Heart right ventricle (tissue), 16 donors: ENCODE measurements at regions of chr4 and their contacts with region 1.

Region 1: DNA sequence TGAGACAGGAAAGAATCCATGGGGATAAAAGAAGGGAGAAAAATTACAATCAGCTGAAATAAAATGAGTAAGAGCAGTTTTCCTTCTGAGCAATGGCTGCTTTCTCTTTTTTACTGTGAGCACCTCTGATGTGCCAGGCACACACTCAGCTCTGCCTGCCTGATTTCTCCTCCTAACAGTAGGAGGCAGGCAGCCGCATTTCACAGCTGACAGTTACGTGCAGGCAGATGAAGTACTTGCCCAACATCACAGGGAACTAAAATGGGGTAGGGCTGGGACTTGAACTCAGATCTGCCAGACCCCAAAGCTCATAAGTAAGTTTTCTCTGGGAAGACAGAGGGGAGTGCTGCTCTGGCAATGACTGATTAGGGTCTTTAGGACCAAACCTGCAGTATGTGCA is 54.6 kb downstream of the C4orf50 start:
- DNase-seq: no peak
- ATAC-seq: no peak
- H3K4me3 ChIP-seq: no peak overlapping the region
- H3K27ac ChIP-seq: no peak overlapping the region
- H3K4me1 ChIP-seq: no peaks in the 10 kb centered on the region
- H3K27me3 ChIP-seq: peaks cover 0 to 46% (median 26%) of the 10 kb centered on the region in 7 donors
- CTCF ChIP-seq: no peak

Region 2: GRCh38 chr4:5528031-5528437 is 435.6 kb before region 1 on chr4:
- intact Hi-C with region 1: no loop called
- DNase-seq: no peak
- ATAC-seq: no peak
- H3K4me3 ChIP-seq: no peak overlapping the region
- H3K27ac ChIP-seq: no peak overlapping the region
- H3K4me1 ChIP-seq: peaks cover 0 to 12% (median 3%) of the 10 kb centered on the region in 9 donors
- H3K27me3 ChIP-seq: no peaks in the 10 kb centered on the region
- CTCF ChIP-seq: no peak

Region 3: GRCh38 chr4:5824635-5825034 is 139.0 kb before region 1 on chr4:
- intact Hi-C with region 1: loop called in 1 of 10 experiments (anchors 10 kb)
- DNase-seq: no peak
- ATAC-seq: no peak
- H3K4me3 ChIP-seq: no peak overlapping the region
- H3K27ac ChIP-seq: no peak overlapping the region
- H3K4me1 ChIP-seq: peaks cover 0 to 20% (median 6%) of the 10 kb centered on the region in 9 donors
- H3K27me3 ChIP-seq: no peaks in the 10 kb centered on the region
- CTCF ChIP-seq: peak in 7 of 9 donors; percentile 23 to 59 (median 37)

Region 4: DNA sequence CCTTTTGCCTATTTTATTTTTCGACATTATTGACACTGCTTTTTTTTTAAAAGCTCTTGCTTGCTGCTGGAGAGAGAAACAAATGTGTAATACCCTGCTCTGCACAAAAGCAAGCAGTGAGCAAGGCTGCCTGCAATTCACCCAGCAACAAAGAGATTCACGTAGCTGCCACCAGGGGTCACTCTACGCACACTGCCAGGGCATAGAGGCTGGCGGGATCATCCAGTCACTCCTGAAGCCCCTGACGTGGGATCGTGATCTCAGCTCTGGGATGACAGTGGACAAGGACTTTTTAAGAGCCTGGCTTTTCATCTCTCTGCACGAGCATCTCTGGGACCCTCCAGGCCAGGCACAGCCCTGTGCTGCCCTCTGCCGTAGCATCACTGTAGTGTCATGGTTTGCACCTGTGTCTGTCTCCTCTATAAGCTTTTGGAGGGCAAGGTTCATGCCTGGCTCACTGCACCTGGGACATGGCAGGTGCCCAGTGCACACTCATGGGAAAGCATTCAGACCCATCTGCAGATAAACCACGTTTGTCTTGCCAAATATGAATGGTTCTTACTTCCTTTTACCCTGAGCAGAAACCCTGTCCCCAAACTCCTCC is 34.8 kb after region 1 on chr4:
- intact Hi-C with region 1: loop called in 1 of 10 experiments (anchors 2 kb)
- DNase-seq: peak; percentile 30 to 36
- ATAC-seq: peak; percentile 49 to 77 (median 72)
- H3K4me3 ChIP-seq: no peak overlapping the region
- H3K27ac ChIP-seq: no peak overlapping the region
- H3K4me1 ChIP-seq: no peaks in the 10 kb centered on the region
- H3K27me3 ChIP-seq: peaks cover 6 to 53% (median 37%) of the 10 kb centered on the region in 7 donors
- CTCF ChIP-seq: peak; percentile 75 to 93 (median 90)